K562 (cell line): ENCODE measurements at regions of chr10 and their contacts with region 1.

Region 1: DNA sequence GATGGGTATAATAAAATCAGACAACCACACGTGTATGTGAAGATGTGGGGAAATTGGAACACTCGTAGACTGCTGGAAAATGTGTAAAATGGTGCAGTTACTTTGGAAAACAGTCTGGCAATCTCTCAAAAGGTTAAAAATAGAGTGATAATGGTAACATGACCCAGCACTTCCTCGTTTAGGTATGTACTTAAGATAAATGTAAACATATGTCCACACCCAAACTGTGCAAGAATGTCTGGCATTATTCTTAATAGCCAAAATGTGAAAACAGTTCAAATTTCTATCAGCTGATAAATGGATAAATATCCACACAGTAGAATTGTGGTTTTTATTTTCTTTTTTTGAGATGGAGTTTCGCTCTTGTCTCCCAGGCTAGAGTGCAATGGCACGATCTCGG is 272.8 kb downstream of the ZNF248 start:
- DNase-seq: no peak
- ATAC-seq: no peak
- H3K4me3 ChIP-seq: no peak overlapping the region
- H3K27ac ChIP-seq: no peak overlapping the region
- H3K4me1 ChIP-seq: no peaks in the 10 kb centered on the region
- H3K27me3 ChIP-seq: no peaks in the 10 kb centered on the region
- CTCF ChIP-seq: no peak
- EP300 ChIP-seq: no peak
- POLR2A ChIP-seq: no peak
- RAD21 ChIP-seq: no peak

Region 2: DNA sequence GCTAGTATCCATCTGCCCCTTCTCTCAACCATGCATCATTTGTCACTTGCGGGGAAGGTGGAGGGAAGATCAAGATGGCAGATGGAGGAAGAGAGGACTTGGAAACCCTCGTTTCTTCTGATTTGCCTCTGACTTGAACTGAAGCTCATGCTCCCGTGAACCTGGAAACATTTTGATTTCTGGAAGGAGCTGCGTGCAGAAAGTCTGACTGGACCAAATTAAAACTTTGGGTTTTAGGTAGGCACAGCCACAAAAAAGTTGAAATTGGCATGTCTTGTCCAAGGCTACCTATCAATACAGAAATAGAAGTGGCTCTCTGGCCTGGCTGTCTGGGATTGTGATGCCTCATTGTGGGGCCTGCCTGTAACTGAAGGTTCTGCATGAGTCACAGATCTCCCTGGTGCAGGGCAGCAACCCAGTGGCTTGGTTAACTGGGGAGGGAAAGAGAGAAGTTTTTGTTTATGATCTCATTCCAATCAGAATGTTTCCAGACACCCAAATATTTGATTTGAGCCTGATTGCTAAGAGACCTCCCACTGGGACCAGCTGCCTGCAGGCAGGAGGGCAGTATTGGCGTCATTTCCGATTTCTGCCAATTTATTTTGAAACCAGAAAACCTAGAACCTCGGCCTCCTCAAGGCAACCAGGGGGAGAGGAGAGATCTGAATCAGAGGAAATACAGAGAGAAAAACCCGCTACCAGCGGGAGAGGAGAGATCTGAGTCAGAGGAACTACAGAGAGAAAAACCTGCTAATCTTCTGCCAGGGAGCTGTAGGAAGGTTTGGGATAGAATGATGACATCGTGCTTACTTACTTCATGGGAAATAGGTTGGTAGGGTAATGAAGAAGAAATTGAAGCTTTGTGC is 95.6 kb before region 1 on chr10:
- CTCF ChIA-PET with region 1: no interaction called
- POLR2A ChIA-PET with region 1: no interaction called
- in situ Hi-C with region 1: loop called (anchors 10 kb)
- intact Hi-C with region 1: no loop called
- DNase-seq: no peak
- ATAC-seq: no peak
- H3K4me3 ChIP-seq: no peak overlapping the region
- H3K27ac ChIP-seq: no peak overlapping the region
- H3K4me1 ChIP-seq: no peaks in the 10 kb centered on the region
- H3K27me3 ChIP-seq: no peaks in the 10 kb centered on the region
- CTCF ChIP-seq: no peak
- EP300 ChIP-seq: no peak
- POLR2A ChIP-seq: no peak
- RAD21 ChIP-seq: no peak

Region 3: GRCh38 chr10:37495415-37495814 is 89.2 kb before region 1 on chr10:
- CTCF ChIA-PET with region 1: no interaction called
- POLR2A ChIA-PET with region 1: no interaction called
- in situ Hi-C with region 1: no loop called
- intact Hi-C with region 1: loop called (anchors 2 kb)
- DNase-seq: no peak
- ATAC-seq: no peak
- H3K4me3 ChIP-seq: no peak overlapping the region
- H3K27ac ChIP-seq: no peak overlapping the region
- H3K4me1 ChIP-seq: no peaks in the 10 kb centered on the region
- H3K27me3 ChIP-seq: no peaks in the 10 kb centered on the region
- CTCF ChIP-seq: 0 out of 6 replicates have a peak, but pooled peaks of 2 of the 3 experiments have one; percentile 15 to 18
- EP300 ChIP-seq: no peak
- POLR2A ChIP-seq: no peak
- RAD21 ChIP-seq: 0 out of 4 replicates have a peak, but pooled peaks of 1 of the 2 experiments have one; percentile 21

Region 4: GRCh38 chr10:37774351-37774750 is 189.7 kb after region 1 on chr10:
- CTCF ChIA-PET with region 1: no interaction called
- POLR2A ChIA-PET with region 1: no interaction called
- in situ Hi-C with region 1: no loop called
- intact Hi-C with region 1: no loop called
- DNase-seq: no peak
- ATAC-seq: no peak
- H3K4me3 ChIP-seq: no peak overlapping the region
- H3K27ac ChIP-seq: no peak overlapping the region
- H3K4me1 ChIP-seq: no peaks in the 10 kb centered on the region
- H3K27me3 ChIP-seq: no peaks in the 10 kb centered on the region
- CTCF ChIP-seq: no peak
- EP300 ChIP-seq: no peak
- POLR2A ChIP-seq: no peak
- RAD21 ChIP-seq: no peak